Dendritic cell treated with granulocyte-macrophage colony-stimulating factor and Interleukin-4, amounts not matched to agents 40 ng/mL and 50 ng/mL, for 4 days (primary cell): ENCODE measurements at regions of chr3 and their contacts with region 1.

Region 1: DNA sequence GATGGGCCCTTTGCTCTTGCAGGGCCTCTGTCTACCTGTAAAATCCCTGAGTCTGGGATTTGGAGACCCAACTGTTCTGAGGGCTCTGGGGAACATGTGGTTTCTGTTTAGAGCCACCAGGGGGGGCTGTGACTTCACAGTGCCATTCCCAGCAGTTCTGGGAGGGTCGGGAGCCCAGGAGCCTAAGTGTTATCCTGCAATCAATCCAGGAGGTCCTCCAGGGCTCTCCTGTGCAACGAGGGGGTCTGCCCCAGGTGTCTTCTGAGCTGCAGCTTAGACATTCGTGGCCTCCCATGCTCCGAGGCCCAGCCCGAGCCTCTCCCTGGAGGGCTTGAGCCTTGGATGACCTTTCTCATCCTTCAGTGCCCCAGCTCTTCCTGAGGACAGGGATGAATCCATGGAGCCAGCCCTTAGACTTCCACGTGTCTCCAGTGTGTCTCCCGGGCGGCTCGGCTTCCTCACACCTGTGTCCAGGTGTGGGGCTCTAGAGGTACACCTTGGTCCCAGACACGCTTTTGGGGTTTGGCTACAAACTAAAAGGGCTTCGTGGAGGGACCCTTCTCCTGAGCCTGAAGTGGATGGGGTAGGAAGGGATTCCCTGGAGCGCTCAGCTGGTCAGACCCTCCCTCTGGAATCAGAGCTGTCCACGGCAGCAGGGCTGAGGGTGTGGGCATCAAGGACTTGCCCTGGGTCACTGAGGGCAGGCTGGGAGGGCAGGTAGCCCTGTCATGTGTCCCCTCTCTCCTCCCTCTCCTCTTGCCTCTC is 20.3 kb upstream of the ABTB1 start:
- H3K4me3 Mint-ChIP-seq: no peak overlapping the region
- H3K27ac Mint-ChIP-seq: no peak overlapping the region
- H3K4me1 Mint-ChIP-seq: peaks cover 7% of the 10 kb centered on the region
- H3K27me3 Mint-ChIP-seq: peaks cover 4% of the 10 kb centered on the region

Region 2: DNA sequence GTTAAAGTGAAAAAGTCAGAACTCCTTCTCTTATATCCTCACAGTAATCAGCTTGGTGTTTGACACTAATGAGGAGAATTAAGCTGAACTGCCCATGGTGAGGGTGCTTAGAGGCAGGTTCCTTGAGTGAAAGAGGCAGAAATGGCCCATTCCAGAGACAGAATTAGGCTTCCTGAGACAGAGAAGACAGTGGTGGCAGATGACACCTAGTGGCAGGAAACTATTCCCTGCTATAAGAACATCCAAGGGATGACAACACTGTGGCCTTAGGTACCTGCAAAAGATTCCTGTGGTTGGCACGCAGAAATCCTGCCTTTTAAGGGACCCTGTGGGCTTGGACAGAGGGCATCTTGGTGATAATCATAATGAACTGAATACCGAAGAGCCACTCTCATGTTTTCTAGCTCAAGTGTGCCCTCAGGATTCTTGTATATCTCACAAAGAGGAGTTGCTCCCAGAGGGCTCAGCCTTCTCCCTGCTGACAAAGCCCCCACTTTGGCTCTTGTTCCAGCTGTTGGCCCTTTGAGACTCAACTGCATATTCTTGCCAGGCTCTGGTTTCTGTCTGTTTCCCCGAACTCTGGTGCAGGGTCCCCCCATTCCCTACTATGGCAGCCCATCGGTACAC is 318.7 kb after region 1 on chr3:
- intact Hi-C with region 1: loop called (anchors 1 kb)
- H3K4me3 Mint-ChIP-seq: no peak overlapping the region
- H3K27ac Mint-ChIP-seq: no peak overlapping the region
- H3K4me1 Mint-ChIP-seq: no peaks in the 10 kb centered on the region
- H3K27me3 Mint-ChIP-seq: peaks cover 23% of the 10 kb centered on the region